Activated naive CD4-positive, alpha-beta T cell treated with anti-CD3 and anti-CD28 coated beads for 36 hours (primary cell): ENCODE measurements at regions of chr3 and their contacts with region 1.

Region 1: GRCh38 chr3:105774444-105775180 is 94.2 kb downstream of the CBLB start:
- DNase-seq: no peak
- H3K4me3 Mint-ChIP-seq: no peak overlapping the region
- H3K27ac Mint-ChIP-seq: peak overlapping the region; percentile 26
- H3K4me1 Mint-ChIP-seq: peaks cover 74% of the 10 kb centered on the region
- H3K27me3 Mint-ChIP-seq: no peaks in the 10 kb centered on the region

Region 2: GRCh38 chr3:105676621-105677300 is 97.9 kb before region 1 on chr3:
- CTCF ChIA-PET with region 1: interaction called, 6 read pairs
- intact Hi-C with region 1: loop called (anchors 1 kb)
- DNase-seq: peak; percentile 77
- H3K4me3 Mint-ChIP-seq: no peak overlapping the region
- H3K27ac Mint-ChIP-seq: peak overlapping the region; percentile 87
- H3K4me1 Mint-ChIP-seq: peaks cover 18% of the 10 kb centered on the region
- H3K27me3 Mint-ChIP-seq: no peaks in the 10 kb centered on the region